H1 (cell line): ENCODE measurements at regions of chr3 and their contacts with region 1.

Region 1: GRCh38 chr3:160003520-160004128 is 15.0 kb downstream of the IL12A start:
- DNase-seq: peak in 1 of 2 experiments; percentile 76
- H3K4me3 ChIP-seq: no peak overlapping the region
- H3K27ac ChIP-seq: no peak overlapping the region
- H3K4me1 ChIP-seq: peaks cover 0 to 6% (median 3%) of the 10 kb centered on the region in 4 experiments; a peak in 3 of 7 replicates
- H3K27me3 ChIP-seq: no peaks in the 10 kb centered on the region
- CTCF ChIP-seq: peak; percentile 76 to 78 (median 77)
- EP300 ChIP-seq: no peak
- POLR2A ChIP-seq: no peak
- RAD21 ChIP-seq: peak; percentile 65 to 76

Region 2: GRCh38 chr3:159813822-159814523 is 189.7 kb before region 1 on chr3:
- CTCF ChIA-PET with region 1: interaction called, 61 read pairs
- POLR2A ChIA-PET with region 1: no interaction called
- DNase-seq: peak in 1 of 2 experiments; percentile 31
- H3K4me3 ChIP-seq: no peak overlapping the region
- H3K27ac ChIP-seq: no peak overlapping the region
- H3K4me1 ChIP-seq: peaks cover 2 to 6% (median 3%) of the 10 kb centered on the region in 4 experiments; a peak in 5 of 7 replicates
- H3K27me3 ChIP-seq: no peaks in the 10 kb centered on the region
- CTCF ChIP-seq: no peak
- EP300 ChIP-seq: no peak
- POLR2A ChIP-seq: no peak
- RAD21 ChIP-seq: no peak

Region 3: DNA sequence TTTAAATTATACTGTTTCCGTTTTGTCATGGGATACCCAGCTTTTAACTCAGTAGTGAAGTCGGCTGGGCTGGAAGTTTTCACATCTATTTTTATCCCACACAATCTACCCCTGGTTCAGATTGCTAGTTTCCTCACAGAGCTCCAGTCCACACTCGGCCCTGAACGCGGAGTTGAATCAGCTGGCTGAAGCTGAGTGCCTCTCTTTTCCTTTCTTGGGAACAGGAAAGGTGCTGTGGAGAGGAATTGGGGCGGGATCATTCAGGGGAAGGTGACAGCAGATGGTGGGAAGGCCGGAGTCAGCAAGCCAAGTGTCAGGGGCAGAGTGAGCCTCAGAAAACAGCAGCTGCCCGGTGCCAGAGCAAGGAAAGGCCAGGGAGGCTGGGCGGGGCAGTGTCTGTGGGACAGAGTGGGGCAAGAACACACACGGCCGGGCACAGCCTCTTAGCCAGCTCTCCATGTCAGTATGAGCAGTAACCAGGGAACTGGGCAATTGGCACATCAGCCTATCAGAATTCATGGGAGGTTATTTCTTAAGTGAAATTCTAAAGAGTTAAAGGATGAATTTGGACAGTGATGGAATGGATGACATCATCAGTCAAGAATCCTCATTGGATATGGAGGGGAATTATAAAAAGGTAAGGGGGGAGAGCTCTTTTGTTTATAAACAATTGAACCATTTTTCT is 150.7 kb before region 1 on chr3:
- CTCF ChIA-PET with region 1: interaction called, 12 read pairs
- POLR2A ChIA-PET with region 1: no interaction called
- DNase-seq: no peak
- H3K4me3 ChIP-seq: peak overlapping the region in 1 of 4 experiments; percentile 1; a peak in 1 of 8 replicates
- H3K27ac ChIP-seq: peak overlapping the region; percentile 51; the same call in 1 of the 2 replicates
- H3K4me1 ChIP-seq: peaks cover 0 to 10% (median 6%) of the 10 kb centered on the region in 4 experiments; a peak in 5 of 7 replicates
- H3K27me3 ChIP-seq: no peaks in the 10 kb centered on the region
- CTCF ChIP-seq: no peak
- EP300 ChIP-seq: no peak
- POLR2A ChIP-seq: 0 out of 3 replicates have a peak, but pooled peaks of 1 of the 2 experiments have one; percentile 28
- RAD21 ChIP-seq: no peak

Region 4: DNA sequence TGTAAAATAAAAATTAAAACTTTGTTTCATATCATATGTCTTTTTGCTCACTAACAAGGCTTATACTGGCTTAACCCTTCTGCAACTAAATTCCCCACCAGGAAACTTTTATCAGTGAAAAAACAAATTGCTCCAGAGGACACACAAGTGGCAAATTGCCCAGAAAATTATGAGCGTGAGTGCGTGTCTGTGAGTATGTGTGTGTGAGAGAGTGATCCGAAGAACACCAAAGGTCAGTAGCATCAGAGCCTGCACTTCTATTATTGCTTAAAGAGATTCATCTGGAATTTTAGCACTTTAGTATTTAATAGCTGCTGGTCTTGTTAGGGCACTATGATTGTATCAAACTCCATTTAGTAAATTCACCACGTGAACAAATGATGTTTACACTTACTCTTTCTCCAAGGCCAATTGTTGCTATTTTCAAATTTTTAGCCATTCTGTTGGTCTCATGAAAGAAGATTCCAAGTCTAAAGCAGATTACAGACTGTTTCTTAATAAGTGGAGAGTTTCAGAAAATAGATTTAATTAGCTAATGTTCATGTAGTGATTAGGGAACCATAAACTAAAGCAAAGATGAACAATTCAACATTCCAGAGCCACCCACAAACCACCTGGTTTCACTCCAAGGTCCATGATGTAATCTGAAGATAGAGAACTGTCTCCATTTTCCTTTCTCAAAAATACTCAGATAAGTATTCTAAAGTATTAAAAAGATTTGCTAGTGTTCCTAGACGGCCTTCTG is 106.1 kb before region 1 on chr3:
- CTCF ChIA-PET with region 1: interaction called, 238 read pairs
- POLR2A ChIA-PET with region 1: no interaction called
- DNase-seq: no peak
- H3K4me3 ChIP-seq: no peak overlapping the region
- H3K27ac ChIP-seq: no peak overlapping the region
- H3K4me1 ChIP-seq: no peaks in the 10 kb centered on the region; a peak in 1 of 7 replicates
- H3K27me3 ChIP-seq: no peaks in the 10 kb centered on the region
- CTCF ChIP-seq: no peak
- EP300 ChIP-seq: no peak
- POLR2A ChIP-seq: no peak
- RAD21 ChIP-seq: no peak

Region 5: DNA sequence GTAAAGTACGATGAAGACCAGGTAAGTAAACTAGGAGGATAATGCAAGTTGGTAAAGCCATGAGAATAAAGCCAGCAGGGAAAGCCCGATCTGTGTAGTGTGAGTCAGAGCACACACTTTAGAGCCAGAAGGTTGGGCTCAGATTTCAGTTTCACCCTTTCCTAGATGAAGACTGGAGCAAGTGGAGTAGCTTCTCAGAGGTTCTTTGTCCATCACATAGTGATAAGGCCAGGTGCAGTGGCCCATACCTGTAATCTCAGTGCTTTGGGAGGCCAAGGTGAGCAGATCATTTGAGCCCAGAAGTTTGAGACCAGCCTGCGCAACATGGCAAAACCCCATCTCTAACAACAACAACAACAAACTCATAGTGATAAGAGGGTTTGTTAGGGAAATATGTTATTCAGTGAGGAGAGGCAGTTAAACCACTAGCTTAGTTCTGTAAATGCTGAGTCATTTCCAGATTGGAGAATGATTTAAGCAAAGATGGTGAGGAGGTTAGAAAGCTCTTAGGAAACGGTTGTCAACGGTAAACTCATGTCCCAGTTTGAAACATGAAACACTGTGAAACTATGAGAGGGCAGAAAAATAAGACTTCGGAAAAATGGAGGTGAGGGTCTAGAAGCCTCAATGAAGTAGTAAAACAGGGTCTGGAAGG is 24.0 kb after region 1 on chr3:
- CTCF ChIA-PET with region 1: interaction called, 20 read pairs
- POLR2A ChIA-PET with region 1: no interaction called
- DNase-seq: no peak
- H3K4me3 ChIP-seq: no peak overlapping the region
- H3K27ac ChIP-seq: no peak overlapping the region
- H3K4me1 ChIP-seq: no peaks in the 10 kb centered on the region
- H3K27me3 ChIP-seq: no peaks in the 10 kb centered on the region
- CTCF ChIP-seq: no peak
- EP300 ChIP-seq: no peak
- POLR2A ChIP-seq: no peak
- RAD21 ChIP-seq: no peak

Region 6: DNA sequence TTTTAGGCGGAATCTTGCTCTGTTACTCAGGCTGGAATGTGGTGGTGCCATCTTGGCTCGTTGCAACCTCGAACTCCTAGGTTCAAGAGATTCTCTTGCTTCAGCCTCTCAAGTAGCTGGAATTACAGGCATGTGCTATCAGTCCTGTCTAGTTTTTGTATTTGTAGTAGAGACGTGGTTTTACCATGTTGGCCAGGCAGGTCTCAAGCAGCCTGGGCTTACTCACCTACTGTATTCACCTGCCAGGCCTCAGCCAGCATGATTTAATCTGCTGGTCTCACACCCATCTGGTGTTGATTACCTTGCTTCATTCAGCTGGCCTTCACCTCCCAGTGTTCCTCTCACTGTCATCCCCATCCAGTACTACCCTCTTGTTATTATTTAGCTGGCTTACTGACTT is 87.0 kb after region 1 on chr3:
- CTCF ChIA-PET with region 1: no interaction called
- POLR2A ChIA-PET with region 1: no interaction called
- DNase-seq: no peak
- H3K4me3 ChIP-seq: no peak overlapping the region
- H3K27ac ChIP-seq: no peak overlapping the region
- H3K4me1 ChIP-seq: no peaks in the 10 kb centered on the region
- H3K27me3 ChIP-seq: no peaks in the 10 kb centered on the region
- CTCF ChIP-seq: no peak
- EP300 ChIP-seq: no peak
- POLR2A ChIP-seq: no peak
- RAD21 ChIP-seq: no peak

Region 7: GRCh38 chr3:160103397-160103796 is 99.8 kb after region 1 on chr3:
- CTCF ChIA-PET with region 1: no interaction called
- POLR2A ChIA-PET with region 1: no interaction called
- DNase-seq: no peak
- H3K4me3 ChIP-seq: no peak overlapping the region
- H3K27ac ChIP-seq: no peak overlapping the region
- H3K4me1 ChIP-seq: no peaks in the 10 kb centered on the region
- H3K27me3 ChIP-seq: no peaks in the 10 kb centered on the region
- CTCF ChIP-seq: no peak
- EP300 ChIP-seq: no peak
- POLR2A ChIP-seq: no peak
- RAD21 ChIP-seq: no peak